ENCODE measurements at regions of chr2 and their contacts with region 1.

Region 1: GRCh38 chr2:217988014-217988839 is 14.6 kb downstream of the TNS1 start:
- DNase-seq: no peak
- H3K4me3 ChIP-seq: no peak overlapping the region
- CTCF ChIP-seq: peak; percentile 87

Region 2: DNA sequence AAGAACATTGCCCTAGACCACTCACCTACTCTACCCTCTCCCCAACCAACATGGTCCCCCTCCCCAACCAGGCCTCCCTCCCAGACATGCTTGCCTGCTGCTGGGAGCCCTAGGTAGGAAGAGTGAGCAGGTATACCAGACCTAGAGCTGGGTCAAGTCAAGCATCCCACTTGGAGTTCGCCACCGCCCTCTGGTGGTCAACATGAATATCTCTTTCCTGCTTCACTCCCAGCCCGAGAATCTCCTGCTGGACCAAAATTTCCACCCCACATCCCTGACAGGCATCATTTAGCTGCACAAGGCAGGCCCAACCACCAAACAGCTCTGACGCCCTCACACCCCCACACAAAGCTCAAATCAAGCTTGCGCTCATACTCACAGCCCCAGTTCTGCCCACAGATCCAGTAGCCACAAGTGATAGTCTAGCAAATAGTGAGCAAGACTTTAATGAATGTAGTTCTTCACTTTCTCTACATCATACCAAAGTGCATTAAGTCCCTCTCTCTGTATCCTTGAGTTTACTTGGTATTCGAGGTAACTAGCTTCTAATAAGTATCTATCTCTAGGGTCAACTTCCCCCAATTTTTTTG is 101.4 kb before region 1 on chr2:
- CTCF ChIA-PET with region 1: interaction called, 436 read pairs
- POLR2A ChIA-PET with region 1: no interaction called
- DNase-seq: no peak
- H3K4me3 ChIP-seq: no peak overlapping the region
- CTCF ChIP-seq: peak; percentile 82

Region 3: GRCh38 chr2:217934321-217935131 is 53.7 kb before region 1 on chr2:
- CTCF ChIA-PET with region 1: interaction called, 26 read pairs
- POLR2A ChIA-PET with region 1: no interaction called
- DNase-seq: peak; percentile 89
- H3K4me3 ChIP-seq: peak overlapping the region; percentile 1
- CTCF ChIP-seq: no peak

Region 4: GRCh38 chr2:217943446-217944389 is 44.5 kb before region 1 on chr2:
- CTCF ChIA-PET with region 1: interaction called, 15 read pairs
- POLR2A ChIA-PET with region 1: no interaction called
- DNase-seq: no peak
- H3K4me3 ChIP-seq: peak overlapping the region; percentile 89
- CTCF ChIP-seq: peak; percentile 68

Region 5: GRCh38 chr2:217972490-217972889 is 15.7 kb before region 1 on chr2:
- CTCF ChIA-PET with region 1: interaction called, 74 read pairs
- POLR2A ChIA-PET with region 1: no interaction called
- DNase-seq: no peak
- H3K4me3 ChIP-seq: no peak overlapping the region
- CTCF ChIP-seq: no peak

Region 6: GRCh38 chr2:218003981-218004419 is 15.8 kb after region 1 on chr2:
- CTCF ChIA-PET with region 1: interaction called, 82 read pairs
- POLR2A ChIA-PET with region 1: interaction called, 3 read pairs
- DNase-seq: peak; percentile 80
- H3K4me3 ChIP-seq: no peak overlapping the region; the same call in 1 of the 2 replicates
- CTCF ChIP-seq: no peak

Region 7: DNA sequence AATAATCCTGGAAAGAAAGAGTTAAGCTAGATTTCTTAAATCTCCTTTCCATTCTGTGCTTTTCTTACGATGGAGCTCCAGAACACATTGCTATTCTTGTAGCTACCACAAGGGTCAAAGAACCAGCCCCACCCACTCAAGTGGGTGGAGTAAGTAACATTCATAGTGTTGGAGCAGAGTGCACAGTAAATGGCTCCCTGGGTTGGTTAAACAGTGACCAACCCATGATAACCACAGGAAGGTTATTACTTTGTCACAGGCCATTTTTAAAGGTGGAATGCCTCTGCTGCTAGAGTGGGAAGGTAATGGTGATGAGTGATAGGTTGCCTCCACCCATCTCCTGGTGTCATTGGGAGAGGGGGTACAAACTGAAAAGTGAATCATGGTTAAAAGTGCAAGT is 242.7 kb after region 1 on chr2:
- CTCF ChIA-PET with region 1: no interaction called
- POLR2A ChIA-PET with region 1: no interaction called
- DNase-seq: no peak
- H3K4me3 ChIP-seq: no peak overlapping the region
- CTCF ChIP-seq: no peak